ENCODE measurements at regions of chr22 and their contacts with region 1.

Region 1: DNA sequence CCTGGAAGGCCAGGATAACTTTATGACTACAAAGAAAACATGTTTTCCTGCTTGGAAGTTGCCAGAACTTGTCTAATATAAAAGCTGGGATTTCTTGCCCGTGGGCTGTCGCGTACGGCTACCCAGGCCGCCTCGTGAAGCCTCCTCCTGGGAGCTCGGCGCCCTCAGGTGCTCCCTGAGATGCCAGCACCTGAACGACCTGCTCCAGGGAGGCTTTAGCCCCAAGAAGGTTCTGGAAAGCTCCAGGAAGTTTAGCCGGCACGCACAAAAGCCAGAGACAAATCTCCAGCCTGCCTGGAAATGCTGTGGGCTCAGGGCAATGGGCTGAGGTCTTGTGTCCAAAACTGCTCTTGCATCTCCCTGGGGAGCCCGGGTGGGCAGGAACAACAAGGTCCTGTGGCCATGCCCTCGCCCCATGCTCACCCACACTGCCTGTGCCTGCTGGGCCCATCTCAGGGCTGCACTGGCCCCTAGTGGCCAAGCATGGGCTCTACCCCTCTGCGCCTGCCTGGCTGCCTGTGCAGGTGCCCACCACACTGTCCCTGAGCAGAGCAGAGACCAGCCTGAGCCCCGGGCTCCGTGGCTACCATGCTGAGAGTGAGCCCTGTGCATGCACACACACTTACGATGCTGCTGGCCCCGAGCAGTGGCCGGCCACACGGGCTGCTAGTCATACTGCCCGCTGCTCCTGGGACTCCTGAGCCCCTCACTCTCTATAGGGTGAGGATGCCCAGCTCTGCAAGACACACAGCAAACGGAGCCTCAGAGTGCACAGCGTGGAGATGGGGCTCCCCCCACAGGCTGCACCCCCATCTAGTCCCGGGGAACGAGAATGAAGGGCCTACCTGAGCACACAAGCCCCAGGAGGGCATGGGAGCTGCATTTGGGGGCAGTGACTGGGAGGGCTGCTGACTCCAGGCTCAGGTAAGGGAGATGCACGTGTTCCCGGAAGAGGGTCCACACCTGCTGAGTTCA is 4.9 kb upstream of the CELSR1 start:
- DNase-seq: peak; percentile 81
- H3K4me3 ChIP-seq: no peak overlapping the region
- H3K27ac ChIP-seq: no peak overlapping the region
- H3K4me1 ChIP-seq: peaks cover 35% of the 10 kb centered on the region
- H3K27me3 ChIP-seq: no peaks in the 10 kb centered on the region

Region 2: GRCh38 chr22:46149512-46150033 is 392.7 kb before region 1 on chr22:
- in situ Hi-C with region 1: loop called (anchors 25 kb)
- DNase-seq: peak; percentile 54
- H3K4me3 ChIP-seq: peak overlapping the region; percentile 91
- H3K27ac ChIP-seq: no peak overlapping the region
- H3K4me1 ChIP-seq: peaks cover 6% of the 10 kb centered on the region
- H3K27me3 ChIP-seq: no peaks in the 10 kb centered on the region

Region 3: DNA sequence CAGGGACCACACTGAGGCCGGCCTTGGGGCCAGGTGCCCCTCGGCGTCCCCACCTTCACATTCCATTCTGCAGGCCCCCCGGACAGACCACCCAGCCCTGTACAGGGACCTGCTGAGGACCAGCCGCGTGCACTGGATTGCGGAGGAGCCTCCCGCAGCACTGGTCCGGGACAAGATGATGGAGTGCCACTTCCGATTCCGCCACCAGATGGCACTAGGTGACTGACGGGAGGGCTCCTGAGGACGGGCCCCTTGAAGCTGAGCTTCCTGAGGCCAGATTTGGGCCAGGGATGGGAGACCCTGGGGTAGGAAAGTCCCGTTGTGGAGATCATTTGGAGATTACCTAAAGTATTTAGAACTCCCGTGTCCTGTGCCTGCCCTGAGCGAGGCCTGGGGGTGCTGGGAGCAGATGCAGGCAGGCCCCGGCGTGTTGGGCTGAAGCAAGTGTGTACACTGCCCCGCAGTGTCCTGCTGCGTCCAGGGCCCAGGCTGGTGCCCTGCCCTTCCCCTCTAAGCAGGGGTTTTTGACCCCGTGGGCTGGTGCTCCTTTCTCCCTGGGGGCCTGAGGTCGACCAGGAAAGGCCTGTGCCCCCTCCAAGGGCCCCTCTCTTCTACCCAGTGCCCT is 186.8 kb before region 1 on chr22:
- in situ Hi-C with region 1: loop called (anchors 10 kb)
- DNase-seq: peak; percentile 60
- H3K4me3 ChIP-seq: no peak overlapping the region
- H3K27ac ChIP-seq: no peak overlapping the region
- H3K4me1 ChIP-seq: no peaks in the 10 kb centered on the region
- H3K27me3 ChIP-seq: no peaks in the 10 kb centered on the region

Region 4: GRCh38 chr22:46381199-46381598 is 161.1 kb before region 1 on chr22:
- in situ Hi-C with region 1: loop called (anchors 10 kb)
- DNase-seq: peak; percentile 44
- H3K4me3 ChIP-seq: no peak overlapping the region
- H3K27ac ChIP-seq: no peak overlapping the region
- H3K4me1 ChIP-seq: no peaks in the 10 kb centered on the region
- H3K27me3 ChIP-seq: no peaks in the 10 kb centered on the region; the same call in 1 of the 2 replicates

Region 5: DNA sequence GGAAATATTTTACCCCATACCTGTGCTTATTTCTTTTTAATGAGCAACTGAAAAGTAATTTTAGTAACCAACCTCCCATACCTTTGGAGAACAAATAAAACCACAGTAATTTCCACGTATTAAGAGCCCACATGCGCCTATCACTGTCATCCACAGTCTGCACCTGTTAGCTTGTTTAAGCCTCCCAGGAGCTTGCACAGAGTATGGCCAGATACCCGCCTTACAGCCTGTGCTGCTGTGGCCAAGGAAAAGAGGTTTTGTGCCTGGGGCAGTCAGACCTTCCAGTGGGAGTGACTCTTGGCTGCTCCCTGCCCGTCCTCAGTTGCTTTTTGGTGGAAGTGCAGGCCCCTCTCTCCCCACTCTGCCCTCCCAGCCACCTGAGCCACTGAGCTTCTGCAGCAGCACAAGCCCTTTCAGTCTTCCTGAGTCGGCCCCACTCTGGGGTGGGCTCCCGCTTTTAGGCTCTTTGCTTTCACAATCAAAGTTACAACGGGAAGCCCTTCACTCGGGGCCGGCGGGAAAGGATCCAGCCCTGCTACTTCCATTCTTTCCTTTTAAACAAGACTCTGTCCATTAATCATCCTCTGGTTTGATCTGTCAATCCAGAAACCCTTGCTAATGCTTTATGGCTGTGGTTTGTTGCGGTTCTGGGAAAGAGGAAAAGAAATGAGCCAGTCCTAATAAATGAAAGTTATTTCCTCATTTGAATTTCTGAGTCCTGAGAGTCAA is 528.9 kb after region 1 on chr22:
- in situ Hi-C with region 1: no loop called
- DNase-seq: no peak
- H3K4me3 ChIP-seq: no peak overlapping the region
- H3K27ac ChIP-seq: no peak overlapping the region
- H3K4me1 ChIP-seq: no peaks in the 10 kb centered on the region
- H3K27me3 ChIP-seq: no peaks in the 10 kb centered on the region